Activated naive CD4-positive, alpha-beta T cell treated with anti-CD3 and anti-CD28 coated beads, Interleukin-2, amount 10 ng/mL, durations not matched to agents 7 days and 5 days (primary cell): ENCODE measurements at regions of chr13 and their contacts with region 1.

Region 1: GRCh38 chr13:39616087-39616694 is 13.2 kb upstream of the LHFPL6 start:
- DNase-seq: peak; percentile 51
- H3K4me3 Mint-ChIP-seq: no peak overlapping the region
- H3K27ac Mint-ChIP-seq: no peak overlapping the region
- H3K4me1 Mint-ChIP-seq: no peaks in the 10 kb centered on the region
- H3K27me3 Mint-ChIP-seq: peaks cover 9% of the 10 kb centered on the region

Region 2: DNA sequence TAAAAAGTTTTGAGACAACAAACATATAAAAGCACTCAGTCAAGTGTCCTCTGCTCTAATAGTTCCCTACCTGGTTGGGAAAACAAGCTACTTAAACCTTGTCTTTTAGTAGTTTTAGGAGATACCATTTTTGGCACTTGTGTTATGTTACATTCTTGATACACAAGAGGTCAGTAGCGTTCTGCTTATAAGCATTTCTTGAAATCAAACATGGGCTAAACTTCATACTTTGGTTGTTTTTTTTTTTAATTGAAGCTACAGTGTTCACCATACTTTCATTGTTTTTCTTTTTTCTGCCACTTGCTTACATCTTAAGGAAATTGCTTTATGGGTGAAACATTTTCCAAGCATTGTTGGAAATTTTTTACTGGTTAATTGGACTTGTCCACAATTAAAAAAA is 565.0 kb before region 1 on chr13:
- CTCF ChIA-PET with region 1: interaction called, 18 read pairs
- DNase-seq: no peak
- H3K4me3 Mint-ChIP-seq: no peak overlapping the region
- H3K27ac Mint-ChIP-seq: no peak overlapping the region
- H3K4me1 Mint-ChIP-seq: no peaks in the 10 kb centered on the region
- H3K27me3 Mint-ChIP-seq: no peaks in the 10 kb centered on the region

Region 3: DNA sequence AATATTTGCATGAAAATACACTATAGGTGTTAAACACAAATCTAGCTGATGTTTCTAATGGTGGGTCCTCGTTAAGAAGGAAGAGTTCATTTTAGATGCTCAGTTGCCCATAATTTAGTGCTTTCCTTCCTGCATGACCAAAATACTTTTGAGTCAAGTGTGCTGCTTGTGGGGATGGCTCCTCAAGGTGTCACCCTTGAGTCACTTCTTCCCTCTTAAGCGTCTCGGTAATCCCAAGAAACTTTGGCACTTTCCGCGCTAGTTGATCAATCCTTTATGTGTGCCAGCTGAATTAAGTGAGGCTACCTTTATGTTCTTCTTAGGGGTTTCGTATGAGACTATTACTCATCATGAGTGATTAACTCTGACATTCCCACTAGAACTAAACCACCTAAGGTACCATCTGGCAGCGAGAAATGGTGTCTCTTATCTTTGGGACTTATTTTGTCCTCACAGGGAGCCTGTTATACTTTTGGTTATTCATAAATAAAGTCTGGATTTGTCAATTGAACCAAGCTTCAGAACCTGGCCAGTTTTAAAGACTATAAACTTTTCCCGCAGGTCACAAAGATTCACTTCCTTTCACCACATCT is 471.2 kb before region 1 on chr13:
- CTCF ChIA-PET with region 1: interaction called, 21 read pairs
- DNase-seq: peak; percentile 34
- H3K4me3 Mint-ChIP-seq: no peak overlapping the region
- H3K27ac Mint-ChIP-seq: no peak overlapping the region
- H3K4me1 Mint-ChIP-seq: no peaks in the 10 kb centered on the region
- H3K27me3 Mint-ChIP-seq: peaks cover 5% of the 10 kb centered on the region

Region 4: GRCh38 chr13:39602614-39603366 is 13.4 kb before region 1 on chr13 and contains the start of gene LHFPL6:
- CTCF ChIA-PET with region 1: interaction called, 13 read pairs
- DNase-seq: peak; percentile 75
- H3K4me3 Mint-ChIP-seq: peak within 1 kb of the TSS; percentile 68
- H3K27ac Mint-ChIP-seq: no peak within 1 kb of the TSS
- H3K4me1 Mint-ChIP-seq: peaks cover 13% of the 10 kb centered on the region
- H3K27me3 Mint-ChIP-seq: peaks cover 52% of the 10 kb centered on the region